ENCODE measurements at regions of chr9 and their contacts with region 1.

Region 1: GRCh38 chr9:69421908-69422801 is 97.1 kb downstream of the ENTREP1 start:
- DNase-seq: peak in 7 of 9 donors; percentile 17 to 52 (median 43)
- ATAC-seq: peak; percentile 67
- H3K4me3 ChIP-seq: no peak overlapping the region
- H3K4me3 Mint-ChIP-seq: peak overlapping the region in 1 of 10 donors; percentile 17
- H3K27ac ChIP-seq: no peak overlapping the region
- H3K27ac Mint-ChIP-seq: no peak overlapping the region
- H3K4me1 ChIP-seq: no peaks in the 10 kb centered on the region
- H3K4me1 Mint-ChIP-seq: peaks cover 0 to 3% (median 0%) of the 10 kb centered on the region in 7 donors
- H3K27me3 ChIP-seq: no peaks in the 10 kb centered on the region
- H3K27me3 Mint-ChIP-seq: peaks cover 6 to 38% (median 13%) of the 10 kb centered on the region in 5 donors

Region 2: DNA sequence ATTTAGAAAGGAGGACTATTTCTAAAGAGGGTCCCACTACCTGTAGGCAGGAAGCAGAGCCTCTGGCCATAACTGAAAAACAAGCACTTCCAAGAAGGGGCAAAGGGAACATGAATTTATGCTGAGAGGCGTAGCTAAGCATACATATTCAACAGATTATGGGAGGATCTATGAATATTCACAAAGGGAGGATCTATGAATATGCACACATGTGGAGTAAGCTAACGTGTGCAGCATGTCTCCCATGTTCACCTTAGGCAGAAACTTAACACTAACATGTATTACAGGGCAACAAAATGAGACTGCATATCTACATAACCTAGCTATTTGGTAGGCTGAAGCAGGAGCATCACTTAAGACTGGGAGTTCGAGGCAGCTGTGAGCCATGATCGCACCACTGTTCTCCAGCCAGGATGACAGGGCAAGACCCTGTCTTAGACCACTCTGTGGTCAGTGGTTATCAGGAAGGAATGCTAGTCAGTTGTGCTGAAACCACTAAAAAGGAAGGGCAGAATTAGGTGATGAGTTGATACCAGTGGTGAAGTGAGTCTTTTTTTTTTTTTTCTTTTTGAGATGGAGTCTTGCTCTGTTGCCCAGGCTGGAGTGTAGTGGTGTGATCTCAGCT is 365.9 kb before region 1 on chr9:
- CTCF ChIA-PET with region 1: no interaction called
- POLR2A ChIA-PET with region 1: no interaction called
- intact Hi-C with region 1: loop called in 1 of 2 experiments (anchors 5 kb)
- DNase-seq: no peak
- ATAC-seq: no peak
- H3K4me3 ChIP-seq: no peak overlapping the region
- H3K4me3 Mint-ChIP-seq: peak overlapping the region in 1 of 10 donors; percentile 16
- H3K27ac ChIP-seq: no peak overlapping the region
- H3K27ac Mint-ChIP-seq: peak overlapping the region in 1 of 9 donors; percentile 68
- H3K4me1 ChIP-seq: no peaks in the 10 kb centered on the region
- H3K4me1 Mint-ChIP-seq: peaks cover 0 to 25% (median 6%) of the 10 kb centered on the region in 7 donors
- H3K27me3 ChIP-seq: no peaks in the 10 kb centered on the region
- H3K27me3 Mint-ChIP-seq: no peaks in the 10 kb centered on the region

Region 3: DNA sequence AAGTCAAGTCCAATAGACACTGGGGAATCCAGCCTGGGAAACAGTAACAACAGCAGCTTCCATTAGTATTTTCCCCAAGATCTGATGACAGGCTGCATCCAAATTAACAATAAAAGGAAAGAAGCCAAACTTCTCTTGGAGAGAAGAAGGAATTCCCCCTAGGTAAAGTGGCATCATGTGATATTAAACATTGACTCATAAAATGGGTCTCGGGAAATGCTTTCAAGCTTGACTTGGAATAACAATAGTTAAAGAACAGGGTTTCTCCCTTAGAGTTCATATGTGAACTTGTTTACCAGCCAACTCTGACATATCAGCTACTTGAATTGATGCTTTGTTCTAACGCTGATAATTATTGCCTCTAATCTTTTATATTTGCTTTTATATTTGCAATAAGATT is 51.7 kb before region 1 on chr9:
- CTCF ChIA-PET with region 1: no interaction called
- POLR2A ChIA-PET with region 1: no interaction called
- intact Hi-C with region 1: no loop called
- DNase-seq: no peak
- ATAC-seq: no peak
- H3K4me3 ChIP-seq: no peak overlapping the region
- H3K4me3 Mint-ChIP-seq: no peak overlapping the region
- H3K27ac ChIP-seq: no peak overlapping the region
- H3K27ac Mint-ChIP-seq: no peak overlapping the region
- H3K4me1 ChIP-seq: no peaks in the 10 kb centered on the region
- H3K4me1 Mint-ChIP-seq: peaks cover 0 to 1% (median 0%) of the 10 kb centered on the region in 7 donors
- H3K27me3 ChIP-seq: no peaks in the 10 kb centered on the region
- H3K27me3 Mint-ChIP-seq: peaks cover 25 to 44% (median 36%) of the 10 kb centered on the region in 5 donors

Region 4: DNA sequence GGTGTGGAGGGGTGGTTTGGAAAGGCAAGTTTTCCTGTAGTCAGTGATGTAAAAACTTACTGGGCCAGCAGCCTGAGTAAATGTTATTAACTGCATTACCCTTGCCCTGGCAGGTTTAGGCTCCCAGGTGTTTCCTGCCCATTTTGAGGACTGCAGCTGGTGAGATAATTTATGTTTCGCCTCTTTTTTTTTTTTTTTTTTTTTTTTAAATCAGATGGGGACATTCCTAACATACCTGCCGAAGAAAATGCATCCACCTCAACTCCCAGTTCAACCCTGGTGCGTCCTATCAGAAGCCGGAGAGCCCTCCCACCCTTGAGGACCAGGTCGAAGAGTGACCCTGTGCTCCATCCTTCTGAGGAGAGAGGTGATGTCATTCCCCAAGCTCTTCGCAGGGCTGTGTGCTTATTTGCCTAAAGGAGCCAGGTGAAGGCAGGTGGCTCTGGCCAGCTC is 36.5 kb before region 1 on chr9:
- CTCF ChIA-PET with region 1: no interaction called
- POLR2A ChIA-PET with region 1: no interaction called
- intact Hi-C with region 1: no loop called
- DNase-seq: no peak
- ATAC-seq: no peak
- H3K4me3 ChIP-seq: no peak overlapping the region
- H3K4me3 Mint-ChIP-seq: no peak overlapping the region
- H3K27ac ChIP-seq: no peak overlapping the region
- H3K27ac Mint-ChIP-seq: no peak overlapping the region
- H3K4me1 ChIP-seq: no peaks in the 10 kb centered on the region
- H3K4me1 Mint-ChIP-seq: no peaks in the 10 kb centered on the region
- H3K27me3 ChIP-seq: no peaks in the 10 kb centered on the region
- H3K27me3 Mint-ChIP-seq: peaks cover 4 to 22% (median 19%) of the 10 kb centered on the region in 5 donors

Region 5: DNA sequence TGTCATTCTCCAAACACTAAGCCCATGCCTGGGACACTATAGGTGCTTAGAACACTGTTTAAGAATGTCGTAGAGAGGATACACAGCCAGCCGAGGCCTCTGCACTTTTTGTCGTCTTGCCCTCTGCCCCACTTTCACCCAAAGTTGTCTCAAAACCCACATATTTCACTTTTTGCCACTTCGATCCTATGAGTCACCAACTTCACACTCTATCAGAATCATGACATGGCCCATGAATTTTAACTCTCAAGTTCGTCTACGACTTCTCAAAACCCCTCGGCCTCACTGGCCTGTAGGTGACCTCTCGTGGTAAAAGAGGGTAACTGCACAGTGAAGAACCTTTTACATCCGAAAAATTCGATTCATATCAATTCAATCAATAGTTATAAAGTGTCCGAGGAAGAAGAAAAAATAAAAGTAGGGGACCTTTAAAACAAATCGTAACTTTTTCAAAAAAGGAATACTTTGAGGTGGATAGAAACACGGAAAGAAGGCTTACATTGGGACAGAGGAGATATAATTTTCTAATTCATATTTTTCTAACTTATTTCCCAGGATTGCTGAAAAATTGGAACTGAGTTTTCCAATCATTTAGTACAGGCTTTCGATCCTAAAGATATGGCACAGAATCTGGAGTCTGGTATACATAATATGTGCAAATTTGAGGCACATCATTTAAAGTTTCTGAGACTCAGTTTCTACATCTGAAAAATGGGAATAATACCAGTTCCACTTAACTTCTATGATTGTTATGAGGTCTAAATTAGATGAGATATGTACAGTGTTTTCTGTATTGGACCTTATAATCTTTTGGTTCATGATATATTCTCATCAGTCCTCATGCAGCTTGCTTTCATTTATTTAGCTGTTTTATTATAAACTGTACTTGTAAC is 127.4 kb after region 1 on chr9:
- CTCF ChIA-PET with region 1: interaction called, 16 read pairs
- POLR2A ChIA-PET with region 1: no interaction called
- intact Hi-C with region 1: loop called (anchors 2 kb)
- DNase-seq: peak in 5 of 9 donors; percentile 10 to 42 (median 25)
- ATAC-seq: peak; percentile 75
- H3K4me3 ChIP-seq: no peak overlapping the region
- H3K4me3 Mint-ChIP-seq: no peak overlapping the region
- H3K27ac ChIP-seq: no peak overlapping the region
- H3K27ac Mint-ChIP-seq: no peak overlapping the region
- H3K4me1 ChIP-seq: no peaks in the 10 kb centered on the region
- H3K4me1 Mint-ChIP-seq: peaks cover 0 to 6% (median 4%) of the 10 kb centered on the region in 7 donors
- H3K27me3 ChIP-seq: no peaks in the 10 kb centered on the region
- H3K27me3 Mint-ChIP-seq: peaks cover 10 to 44% (median 18%) of the 10 kb centered on the region in 5 donors

Region 6: DNA sequence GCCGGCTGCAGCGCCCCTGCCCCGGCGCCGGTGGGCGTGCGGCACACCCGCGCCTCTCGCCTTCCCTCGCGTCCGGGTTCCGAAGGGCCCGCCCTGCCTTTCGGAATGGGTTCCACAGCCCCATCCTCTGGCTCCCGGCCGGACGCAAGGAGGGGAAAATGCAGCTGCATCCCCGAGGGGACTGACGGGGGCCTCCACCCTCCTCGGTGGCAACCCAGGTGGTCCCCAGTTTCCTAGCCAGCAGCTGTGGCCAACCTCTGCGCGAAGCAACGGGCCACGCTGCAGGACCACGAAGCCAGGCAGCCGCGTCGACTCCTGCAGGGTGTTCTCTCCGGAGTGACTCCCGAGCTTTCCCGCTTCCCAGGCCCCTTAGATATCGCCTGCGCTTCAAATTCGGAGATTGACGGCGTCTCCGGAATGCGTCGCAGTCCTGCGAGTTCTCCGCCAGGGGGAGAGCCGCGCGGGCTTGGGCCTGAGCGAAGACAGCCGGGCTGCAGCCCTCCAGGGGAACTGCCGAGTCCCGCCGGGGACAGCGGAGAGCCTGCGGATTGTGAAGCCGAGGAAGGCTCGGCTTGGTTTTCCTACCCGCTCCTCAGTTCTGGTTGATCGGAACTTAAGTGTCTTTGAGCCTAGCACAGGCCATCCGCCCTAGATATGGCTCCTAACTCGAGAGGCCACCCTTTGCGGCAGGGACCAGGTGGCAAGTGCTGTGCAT is 250.6 kb after region 1 on chr9:
- CTCF ChIA-PET with region 1: no interaction called
- POLR2A ChIA-PET with region 1: no interaction called
- intact Hi-C with region 1: loop called in 1 of 2 experiments (anchors 10 kb)
- DNase-seq: peak; percentile 51 to 78 (median 70)
- ATAC-seq: peak; percentile 88
- H3K4me3 ChIP-seq: peak overlapping the region; percentile 84
- H3K4me3 Mint-ChIP-seq: peak overlapping the region; percentile 80 to 91 (median 86)
- H3K27ac ChIP-seq: no peak overlapping the region
- H3K27ac Mint-ChIP-seq: peak overlapping the region in 7 of 9 donors; percentile 17 to 62 (median 59)
- H3K4me1 ChIP-seq: peaks cover 5 to 6% of the 10 kb centered on the region in 2 donors
- H3K4me1 Mint-ChIP-seq: peaks cover 0 to 35% (median 28%) of the 10 kb centered on the region in 7 donors
- H3K27me3 ChIP-seq: no peaks in the 10 kb centered on the region
- H3K27me3 Mint-ChIP-seq: peaks cover 0 to 47% (median 9%) of the 10 kb centered on the region in 5 donors

Region 7: GRCh38 chr9:69877854-69878514 is 455.8 kb after region 1 on chr9:
- CTCF ChIA-PET with region 1: no interaction called
- POLR2A ChIA-PET with region 1: no interaction called
- intact Hi-C with region 1: loop called (anchors 2 kb)
- DNase-seq: peak in 5 of 9 donors; percentile 2 to 25 (median 6)
- ATAC-seq: no peak
- H3K4me3 ChIP-seq: no peak overlapping the region
- H3K4me3 Mint-ChIP-seq: no peak overlapping the region
- H3K27ac ChIP-seq: no peak overlapping the region
- H3K27ac Mint-ChIP-seq: no peak overlapping the region
- H3K4me1 ChIP-seq: no peaks in the 10 kb centered on the region
- H3K4me1 Mint-ChIP-seq: no peaks in the 10 kb centered on the region
- H3K27me3 ChIP-seq: no peaks in the 10 kb centered on the region
- H3K27me3 Mint-ChIP-seq: peaks cover 0 to 37% (median 2%) of the 10 kb centered on the region in 5 donors

Region 8: DNA sequence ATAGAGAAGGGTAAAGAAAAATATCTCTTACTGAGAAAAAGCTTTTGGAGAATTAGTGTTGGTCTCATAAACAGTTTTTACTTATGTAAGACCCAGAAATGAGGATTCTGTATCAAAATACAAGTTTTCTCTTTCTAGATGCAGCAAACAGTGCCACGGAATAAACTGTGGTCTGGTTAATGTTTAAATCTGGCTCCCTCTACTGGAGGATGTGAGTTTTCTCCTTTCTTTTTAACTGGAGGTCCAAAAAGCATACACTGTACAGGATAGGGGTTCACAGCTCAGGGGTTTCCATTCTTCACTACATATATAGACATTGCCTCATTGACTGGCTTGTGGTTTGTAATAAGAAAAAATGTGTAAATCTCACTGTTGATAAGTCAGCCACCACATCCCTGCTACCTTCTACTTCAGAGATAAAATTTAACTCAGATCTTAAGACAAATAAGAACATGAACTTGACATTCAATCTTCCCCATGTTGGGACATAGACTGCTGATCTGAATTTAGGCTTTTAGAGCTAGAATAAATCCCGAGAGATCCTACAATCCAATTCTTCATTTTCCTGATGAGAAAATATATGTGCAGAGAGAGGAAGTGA is 497.4 kb after region 1 on chr9:
- CTCF ChIA-PET with region 1: interaction called, 17 read pairs
- POLR2A ChIA-PET with region 1: no interaction called
- intact Hi-C with region 1: loop called (anchors 1 to 2 kb)
- DNase-seq: peak in 6 of 9 donors; percentile 14 to 52 (median 41)
- ATAC-seq: peak; percentile 85
- H3K4me3 ChIP-seq: no peak overlapping the region
- H3K4me3 Mint-ChIP-seq: no peak overlapping the region
- H3K27ac ChIP-seq: no peak overlapping the region
- H3K27ac Mint-ChIP-seq: no peak overlapping the region
- H3K4me1 ChIP-seq: no peaks in the 10 kb centered on the region
- H3K4me1 Mint-ChIP-seq: no peaks in the 10 kb centered on the region
- H3K27me3 ChIP-seq: no peaks in the 10 kb centered on the region
- H3K27me3 Mint-ChIP-seq: peaks cover 5 to 21% (median 17%) of the 10 kb centered on the region in 5 donors

Region 9: DNA sequence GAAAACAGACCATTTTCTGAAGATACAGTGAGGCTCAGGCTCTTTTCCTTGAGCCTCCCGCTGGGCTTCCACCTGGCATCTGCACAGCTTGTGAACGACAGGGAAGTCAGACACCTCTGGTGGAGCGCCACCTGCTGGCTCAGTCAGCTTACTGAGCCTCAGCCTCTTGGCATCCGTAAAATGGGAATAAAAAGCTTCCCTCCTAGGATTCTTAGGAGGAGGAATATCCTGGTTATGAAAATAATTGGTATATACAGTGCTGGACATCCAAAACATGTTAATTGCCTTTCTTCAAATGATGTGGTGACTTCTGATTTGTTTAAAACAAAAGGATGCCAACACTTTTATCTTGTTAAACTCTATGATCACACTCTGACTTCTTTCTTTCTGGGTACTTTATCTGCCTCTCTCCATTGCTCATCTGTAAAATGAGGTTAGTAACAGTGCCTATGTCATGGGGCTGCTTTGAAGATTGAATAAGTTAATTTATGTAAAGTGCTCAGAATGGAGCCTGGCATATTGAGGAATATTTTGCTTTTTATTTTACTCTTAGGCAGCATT is 689.0 kb after region 1 on chr9:
- CTCF ChIA-PET with region 1: interaction called, 24 read pairs
- POLR2A ChIA-PET with region 1: no interaction called
- intact Hi-C with region 1: loop called in 1 of 2 experiments (anchors 5 kb)
- DNase-seq: peak in 7 of 9 donors; percentile 11 to 46 (median 22)
- ATAC-seq: peak; percentile 70
- H3K4me3 ChIP-seq: no peak overlapping the region
- H3K4me3 Mint-ChIP-seq: peak overlapping the region in 1 of 10 donors; percentile 32
- H3K27ac ChIP-seq: no peak overlapping the region
- H3K27ac Mint-ChIP-seq: no peak overlapping the region
- H3K4me1 ChIP-seq: no peaks in the 10 kb centered on the region
- H3K4me1 Mint-ChIP-seq: peaks cover 4 to 10% (median 7%) of the 10 kb centered on the region in 7 donors
- H3K27me3 ChIP-seq: peaks cover 0 to 4% of the 10 kb centered on the region in 2 donors
- H3K27me3 Mint-ChIP-seq: peaks cover 13 to 32% (median 20%) of the 10 kb centered on the region in 5 donors

Measured in naive thymus-derived CD4-positive, alpha-beta T cell (primary cell).